Endothelial cell of umbilical vein (primary cell): ENCODE measurements at regions of chr14 and their contacts with region 1.

Region 1: DNA sequence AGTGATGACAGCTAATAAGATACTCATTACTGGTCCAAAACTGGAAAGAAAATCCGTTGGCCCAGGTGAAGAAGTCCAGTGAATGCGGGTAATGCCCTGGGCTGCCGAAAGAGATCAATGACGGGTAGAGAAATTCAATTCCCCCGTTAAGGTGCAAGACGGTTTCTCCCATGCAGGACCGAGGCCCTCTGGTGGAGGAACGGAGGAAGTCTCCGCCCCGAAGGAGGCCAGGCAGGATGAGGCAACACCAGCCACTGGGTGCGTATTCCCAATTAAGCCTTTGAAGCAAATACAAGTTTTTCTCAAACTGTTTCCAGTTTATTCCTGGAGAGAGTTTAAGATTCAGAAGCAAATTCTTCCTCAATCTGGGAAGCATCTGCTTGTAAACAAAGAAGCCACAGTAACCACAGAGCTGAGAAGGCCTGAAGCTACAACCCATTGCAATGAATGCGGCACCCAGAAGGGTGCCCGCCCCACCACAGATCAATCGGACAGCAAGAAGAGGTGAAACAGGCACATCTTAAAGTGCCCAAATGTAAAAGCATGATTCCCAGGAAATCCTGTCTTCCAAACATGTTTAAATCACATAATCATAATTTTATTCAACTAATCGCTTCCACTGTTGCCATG is 118.5 kb downstream of the TTC7B start:
- DNase-seq: peak; percentile 76
- H3K4me3 ChIP-seq: no peak overlapping the region
- H3K27ac ChIP-seq: no peak overlapping the region
- H3K4me1 ChIP-seq: peaks cover 18% of the 10 kb centered on the region
- H3K27me3 ChIP-seq: no peaks in the 10 kb centered on the region
- CTCF ChIP-seq: peak; percentile 92
- POLR2A ChIP-seq: no peak

Region 2: DNA sequence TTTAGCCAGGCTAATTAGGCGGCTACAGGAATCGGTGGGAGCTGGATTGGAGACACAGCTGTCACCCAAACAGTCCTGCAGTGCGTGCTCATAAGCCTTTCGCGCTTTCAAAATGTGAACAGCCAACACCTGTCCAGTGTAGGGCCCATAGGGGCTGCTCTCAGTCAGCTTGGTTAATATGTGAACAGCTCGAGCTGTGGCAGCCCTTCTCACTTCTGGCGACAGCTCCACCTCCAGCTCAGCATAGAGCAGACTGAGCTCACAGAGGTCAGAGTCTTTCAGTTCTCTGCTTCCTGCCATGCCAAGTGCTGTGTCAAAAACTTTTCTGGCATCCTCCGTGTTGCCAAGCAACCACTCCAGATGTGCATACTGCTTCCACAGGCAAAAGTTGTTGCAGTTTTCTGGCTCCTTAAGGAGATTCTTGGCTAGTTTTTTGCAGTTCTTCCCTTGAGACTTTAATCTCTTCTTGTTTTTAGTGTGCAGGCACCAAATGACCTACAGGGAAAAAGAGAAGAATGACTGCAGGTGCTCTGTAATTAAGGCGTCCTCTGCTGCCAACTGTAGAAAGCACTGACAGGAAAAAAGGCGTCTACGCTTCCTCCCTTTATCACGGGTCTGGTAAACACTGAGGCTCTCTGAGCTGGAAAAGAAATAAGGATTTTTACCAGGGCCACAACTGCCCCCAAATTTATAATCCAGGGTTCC is 408.9 kb before region 1 on chr14:
- CTCF ChIA-PET with region 1: interaction called, 25 read pairs
- POLR2A ChIA-PET with region 1: no interaction called
- dilution Hi-C with region 1: no loop called
- intact Hi-C with region 1: no loop called
- DNase-seq: peak; percentile 68
- H3K4me3 ChIP-seq: no peak overlapping the region
- H3K27ac ChIP-seq: no peak overlapping the region
- H3K4me1 ChIP-seq: peaks cover 5% of the 10 kb centered on the region
- H3K27me3 ChIP-seq: no peaks in the 10 kb centered on the region
- CTCF ChIP-seq: no peak
- POLR2A ChIP-seq: no peak

Region 3: DNA sequence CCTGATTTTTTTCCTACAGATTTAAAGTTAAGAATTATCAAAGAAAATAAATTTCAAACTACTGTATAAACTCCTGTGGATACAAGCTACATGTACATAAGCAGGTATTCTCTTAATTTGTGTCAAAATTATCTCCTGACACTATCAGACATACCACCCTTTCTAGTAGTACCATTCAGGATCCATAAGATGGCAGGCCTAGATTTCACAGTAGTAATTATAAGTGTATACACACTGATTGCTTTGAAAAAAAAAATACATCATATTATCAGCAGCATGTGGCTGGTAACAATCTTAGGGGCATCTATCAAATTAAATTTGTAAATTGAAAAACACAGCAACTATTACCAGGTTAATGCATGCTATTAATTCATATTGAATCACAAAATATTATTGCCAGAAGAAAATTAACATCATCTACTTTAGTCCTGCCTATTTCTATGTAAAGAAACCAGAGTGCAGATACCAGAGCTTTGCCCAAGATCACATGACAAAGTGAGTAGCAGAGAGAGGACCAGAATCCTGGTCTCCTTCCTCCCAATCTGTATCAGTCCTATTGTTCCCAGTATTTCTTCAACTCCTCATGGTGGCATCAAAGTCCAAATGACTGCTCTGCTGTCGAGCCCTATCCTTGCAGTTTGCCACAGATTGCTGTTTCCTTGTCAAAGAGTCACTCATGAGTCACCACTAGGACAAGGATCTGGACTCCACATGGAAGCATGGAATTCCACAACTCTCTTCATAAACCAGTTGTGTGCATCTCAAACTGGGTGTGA is 328.6 kb before region 1 on chr14:
- CTCF ChIA-PET with region 1: interaction called, 15 read pairs
- POLR2A ChIA-PET with region 1: no interaction called
- dilution Hi-C with region 1: no loop called
- intact Hi-C with region 1: no loop called
- DNase-seq: peak; percentile 25
- H3K4me3 ChIP-seq: no peak overlapping the region
- H3K27ac ChIP-seq: no peak overlapping the region
- H3K4me1 ChIP-seq: no peaks in the 10 kb centered on the region
- H3K27me3 ChIP-seq: no peaks in the 10 kb centered on the region
- CTCF ChIP-seq: no peak
- POLR2A ChIP-seq: no peak

Region 4: GRCh38 chr14:90409209-90409730 is 288.4 kb before region 1 on chr14:
- CTCF ChIA-PET with region 1: interaction called, 10 read pairs
- POLR2A ChIA-PET with region 1: no interaction called
- dilution Hi-C with region 1: no loop called
- intact Hi-C with region 1: no loop called
- DNase-seq: peak; percentile 99
- H3K4me3 ChIP-seq: no peak overlapping the region
- H3K27ac ChIP-seq: peak overlapping the region; percentile 92
- H3K4me1 ChIP-seq: peaks cover 37% of the 10 kb centered on the region
- H3K27me3 ChIP-seq: no peaks in the 10 kb centered on the region
- CTCF ChIP-seq: no peak
- POLR2A ChIP-seq: peak; percentile 61

Region 5: DNA sequence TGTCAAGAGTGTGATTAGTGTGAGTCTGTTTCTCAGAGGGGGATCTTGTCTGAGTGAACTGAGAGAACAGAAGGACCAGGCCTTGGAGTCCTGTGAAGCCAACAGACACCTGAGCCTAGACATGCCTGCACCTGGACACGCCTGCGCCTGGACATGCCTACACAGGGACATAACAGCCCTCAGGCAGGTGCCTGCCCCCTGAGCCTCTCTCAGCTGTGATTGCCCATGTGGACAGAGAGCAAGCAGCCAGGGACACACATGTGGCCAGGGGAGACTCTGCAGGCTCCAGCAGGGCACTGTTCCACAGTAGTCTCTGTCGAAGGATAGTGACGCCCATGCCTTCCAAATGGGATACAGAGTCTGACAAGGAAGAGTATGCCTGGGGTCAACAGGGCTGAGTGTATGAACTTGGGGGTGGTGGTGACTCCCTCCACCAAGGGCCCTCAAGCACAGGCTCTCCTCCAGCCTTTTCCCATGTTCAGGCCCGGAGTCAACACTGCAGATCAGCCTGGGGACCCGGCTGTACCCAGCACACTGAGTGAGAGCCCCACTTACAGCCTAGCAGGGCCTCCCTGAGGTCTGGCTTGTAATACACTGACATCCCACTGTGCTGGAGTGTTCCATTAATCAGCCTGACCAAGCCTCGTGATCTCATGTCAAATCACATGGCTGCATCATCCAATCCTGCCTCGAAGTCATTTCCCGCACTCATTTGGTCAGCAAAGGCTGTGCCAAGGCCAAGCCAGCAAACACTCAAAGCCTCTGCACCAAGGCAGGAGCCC is 127.9 kb before region 1 on chr14:
- CTCF ChIA-PET with region 1: no interaction called
- POLR2A ChIA-PET with region 1: no interaction called
- dilution Hi-C with region 1: no loop called
- intact Hi-C with region 1: loop called (anchors 2 kb)
- DNase-seq: no peak
- H3K4me3 ChIP-seq: no peak overlapping the region
- H3K27ac ChIP-seq: no peak overlapping the region
- H3K4me1 ChIP-seq: no peaks in the 10 kb centered on the region
- H3K27me3 ChIP-seq: no peaks in the 10 kb centered on the region
- CTCF ChIP-seq: no peak
- POLR2A ChIP-seq: no peak

Region 6: GRCh38 chr14:90795746-90796145 is 98.1 kb after region 1 on chr14:
- CTCF ChIA-PET with region 1: no interaction called
- POLR2A ChIA-PET with region 1: no interaction called
- dilution Hi-C with region 1: no loop called
- intact Hi-C with region 1: no loop called
- DNase-seq: peak; percentile 92
- H3K4me3 ChIP-seq: no peak overlapping the region
- H3K27ac ChIP-seq: peak overlapping the region; percentile 88
- H3K4me1 ChIP-seq: peaks cover 30% of the 10 kb centered on the region
- H3K27me3 ChIP-seq: no peaks in the 10 kb centered on the region
- CTCF ChIP-seq: no peak
- POLR2A ChIP-seq: no peak